ENCODE measurements at regions of chr12 and their contacts with region 1.

Region 1: DNA sequence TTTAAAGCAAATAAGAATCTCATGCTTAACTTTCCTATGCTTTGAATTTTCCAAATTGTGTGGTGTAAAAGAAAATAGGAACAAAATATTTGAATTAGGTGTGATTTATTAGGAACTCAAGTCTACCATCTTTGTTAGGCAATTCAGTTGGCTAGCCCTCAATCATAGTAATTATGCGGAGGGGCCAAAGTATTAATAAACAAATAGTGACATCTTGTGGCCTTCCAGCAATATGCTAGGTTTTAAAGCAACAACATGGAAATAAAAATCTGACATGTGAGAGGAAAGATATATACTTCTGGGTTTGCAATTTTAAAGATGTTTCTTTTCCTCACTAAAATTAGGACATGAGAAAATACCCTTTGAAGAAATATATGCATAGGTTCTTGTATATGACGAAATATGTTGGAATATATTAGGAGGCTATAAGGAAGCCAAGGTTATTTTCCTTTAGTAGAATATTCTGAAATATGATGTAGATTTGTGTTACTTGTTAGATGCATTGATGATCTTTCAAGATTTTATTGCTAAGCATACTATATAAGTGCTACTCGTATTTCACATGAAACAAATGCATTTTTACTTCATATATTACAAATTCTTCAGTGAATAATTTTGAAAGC is 200.4 kb downstream of the PTPRO start:
- DNase-seq: peak; percentile 38
- ATAC-seq: no peak
- H3K4me3 ChIP-seq: no peak overlapping the region
- H3K27ac ChIP-seq: no peak overlapping the region
- H3K4me1 ChIP-seq: peaks cover 7% of the 10 kb centered on the region; the same call in 1 of the 2 replicates
- H3K27me3 ChIP-seq: peaks cover 0 to 4% of the 10 kb centered on the region in 2 experiments; a peak in 1 of 5 replicates
- CTCF ChIP-seq: peak; percentile 64
- EP300 ChIP-seq: no peak
- POLR2A ChIP-seq: no peak
- RAD21 ChIP-seq: no peak

Region 2: DNA sequence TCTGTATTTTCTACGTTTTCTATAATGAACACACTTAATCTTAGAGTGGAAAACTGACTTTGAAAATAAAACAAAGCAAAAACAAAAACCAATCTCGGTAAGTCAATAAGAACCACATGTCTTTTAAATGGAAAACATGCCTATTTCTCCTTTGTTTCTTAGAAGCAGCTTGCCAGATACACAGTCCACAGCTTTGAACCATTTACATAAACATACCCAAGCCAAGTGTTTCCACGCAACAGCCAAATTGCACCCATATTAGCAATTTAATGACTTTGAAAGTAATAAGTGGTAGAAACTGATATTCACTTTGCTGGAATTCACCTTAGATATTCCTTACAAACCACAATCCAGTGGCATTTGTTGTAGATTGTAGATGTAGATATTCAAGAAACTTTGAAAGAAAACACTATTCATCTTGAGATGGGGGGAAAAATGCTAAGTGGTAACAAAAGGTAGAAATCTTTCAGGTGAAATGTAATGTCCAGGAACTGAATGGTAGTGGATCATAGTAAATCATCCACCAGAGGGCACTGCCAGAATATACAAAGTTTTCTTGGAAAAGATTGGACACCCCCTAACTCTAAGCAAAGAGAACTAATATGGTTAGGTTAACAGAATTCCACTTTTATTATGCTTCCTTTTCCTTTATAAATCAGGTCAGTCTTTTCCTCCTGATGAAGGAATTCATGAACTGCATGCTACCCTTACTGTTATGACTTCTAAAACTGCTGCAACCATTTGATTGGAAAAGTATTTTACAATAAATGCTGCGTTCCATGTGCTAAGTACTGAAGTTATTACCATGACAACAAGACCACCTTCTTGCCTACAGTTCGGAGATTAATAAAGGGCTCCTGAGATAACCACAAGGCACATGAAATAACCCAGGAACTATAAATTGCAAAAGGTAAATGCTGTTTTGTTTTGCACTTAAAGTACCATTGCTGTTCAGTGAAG is 371.2 kb before region 1 on chr12:
- CTCF ChIA-PET with region 1: no interaction called
- POLR2A ChIA-PET with region 1: no interaction called
- in situ Hi-C with region 1: no loop called
- intact Hi-C with region 1: loop called (anchors 5 kb)
- DNase-seq: peak; percentile 5
- ATAC-seq: peak; percentile 53; the same call in 2 of the 3 replicates
- H3K4me3 ChIP-seq: no peak overlapping the region
- H3K27ac ChIP-seq: no peak overlapping the region
- H3K4me1 ChIP-seq: no peaks in the 10 kb centered on the region
- H3K27me3 ChIP-seq: 0 out of 5 replicates have a peak, but pooled peaks cover 0 to 3% of the 10 kb centered on the region in 2 experiments
- CTCF ChIP-seq: peak; percentile 43
- EP300 ChIP-seq: no peak
- POLR2A ChIP-seq: no peak
- RAD21 ChIP-seq: no peak

Region 3: DNA sequence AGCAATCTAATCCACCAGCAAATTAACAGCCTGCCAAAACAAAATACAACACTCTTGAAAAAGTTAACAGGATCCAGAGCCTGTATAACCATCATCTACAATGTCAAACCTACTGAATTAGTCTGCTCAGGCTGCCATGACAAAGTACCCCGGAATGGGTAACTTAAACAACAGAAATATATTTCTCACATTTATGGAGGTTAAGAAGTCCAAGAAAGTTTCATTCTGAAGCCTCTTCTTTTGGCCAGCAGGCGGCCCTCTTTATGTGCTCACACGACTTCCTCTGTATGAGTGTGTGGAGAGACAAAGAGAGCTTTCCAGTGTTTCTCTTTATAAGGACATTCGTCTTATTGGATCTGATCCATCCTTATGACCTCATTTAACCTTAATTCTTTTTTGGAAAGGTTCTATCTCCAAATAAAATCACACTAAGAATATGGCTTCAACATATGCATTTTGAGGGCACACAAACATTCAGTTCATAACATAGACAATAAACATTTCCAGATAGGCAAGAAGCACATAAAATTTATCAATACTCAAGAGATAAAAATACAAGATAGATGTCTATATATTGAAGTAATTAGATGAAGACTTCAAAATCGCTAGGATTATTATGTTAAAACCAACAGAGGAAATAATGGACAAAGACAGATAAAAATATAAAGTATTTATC is 295.5 kb before region 1 on chr12:
- CTCF ChIA-PET with region 1: no interaction called
- POLR2A ChIA-PET with region 1: no interaction called
- in situ Hi-C with region 1: no loop called
- intact Hi-C with region 1: loop called (anchors 1 kb)
- DNase-seq: peak; percentile 42
- ATAC-seq: peak; percentile 88
- H3K4me3 ChIP-seq: no peak overlapping the region
- H3K27ac ChIP-seq: no peak overlapping the region
- H3K4me1 ChIP-seq: no peaks in the 10 kb centered on the region
- H3K27me3 ChIP-seq: peaks cover 0 to under 1% of the 10 kb centered on the region in 2 experiments; a peak in 2 of 5 replicates
- CTCF ChIP-seq: peak; percentile 46
- EP300 ChIP-seq: no peak
- POLR2A ChIP-seq: no peak
- RAD21 ChIP-seq: no peak

Region 4: DNA sequence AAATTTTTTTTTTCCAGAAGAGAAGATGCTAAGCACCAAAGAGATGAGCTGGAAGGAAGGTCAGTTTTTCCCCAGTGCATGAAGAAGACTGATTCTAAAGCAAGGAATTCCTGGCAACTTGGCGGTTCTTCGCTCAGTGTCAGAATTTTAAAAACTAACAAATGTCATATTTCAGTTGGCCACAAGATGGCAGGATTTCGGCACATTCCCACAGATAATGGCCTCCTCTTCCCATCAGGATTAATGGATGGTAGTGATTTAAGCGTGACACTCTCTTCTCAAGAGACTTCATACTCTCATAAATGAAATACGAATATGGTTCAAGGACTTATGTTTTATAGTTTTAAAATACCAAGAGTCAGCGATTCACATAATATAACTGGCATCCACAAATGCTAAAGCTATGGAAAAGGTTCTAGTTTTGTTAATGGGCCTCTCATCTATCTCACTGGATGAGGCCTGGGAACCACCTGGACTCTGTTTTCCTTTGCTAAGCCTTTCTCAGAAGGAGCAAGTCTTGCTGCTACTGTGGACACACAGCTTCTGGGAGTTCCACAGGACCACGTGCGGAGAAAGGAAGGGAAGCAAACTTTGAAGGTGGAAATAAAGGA is 246.5 kb before region 1 on chr12:
- CTCF ChIA-PET with region 1: interaction called, 27 read pairs
- POLR2A ChIA-PET with region 1: no interaction called
- in situ Hi-C with region 1: loop called (anchors 5 kb)
- intact Hi-C with region 1: loop called (anchors 1 kb)
- DNase-seq: peak; percentile 11
- ATAC-seq: peak; percentile 79
- H3K4me3 ChIP-seq: no peak overlapping the region
- H3K27ac ChIP-seq: no peak overlapping the region
- H3K4me1 ChIP-seq: no peaks in the 10 kb centered on the region
- H3K27me3 ChIP-seq: no peaks in the 10 kb centered on the region; a peak in 1 of 5 replicates
- CTCF ChIP-seq: peak; percentile 78
- EP300 ChIP-seq: no peak
- POLR2A ChIP-seq: no peak
- RAD21 ChIP-seq: no peak; the same call in 1 of the 2 replicates

Region 5: DNA sequence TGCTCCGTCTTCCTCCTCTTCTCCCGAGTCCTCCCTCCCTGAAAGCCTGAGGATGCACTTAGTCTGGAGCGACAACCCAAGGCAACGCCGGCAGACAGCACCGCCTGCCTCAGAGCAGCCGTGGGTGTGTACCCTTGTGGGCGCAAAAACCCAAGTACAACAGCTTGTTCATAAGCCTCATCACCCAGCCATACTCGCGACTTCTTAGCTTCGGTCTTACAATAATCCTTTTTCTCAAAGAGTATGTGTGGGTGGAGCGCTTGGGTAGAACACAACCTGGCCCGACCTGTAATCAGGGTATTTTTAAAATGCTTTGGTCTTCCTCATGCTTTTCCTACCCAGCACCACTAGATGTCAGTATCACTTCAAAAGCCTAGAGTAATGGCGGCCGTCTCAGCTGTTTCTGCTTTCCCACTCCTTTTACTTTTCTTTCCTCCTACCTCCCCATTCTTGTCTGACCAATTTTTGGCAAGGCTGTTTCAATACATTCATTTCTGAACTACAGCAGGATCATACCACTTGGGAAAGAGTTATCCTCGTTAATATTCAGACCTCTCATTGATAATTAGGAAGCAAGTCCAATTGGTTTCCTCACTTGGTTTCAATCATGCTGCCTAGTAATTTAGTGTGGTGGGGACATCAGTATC is 67.6 kb after region 1 on chr12:
- CTCF ChIA-PET with region 1: no interaction called
- POLR2A ChIA-PET with region 1: no interaction called
- in situ Hi-C with region 1: no loop called
- intact Hi-C with region 1: no loop called
- DNase-seq: peak; percentile 70
- ATAC-seq: peak; percentile 92
- H3K4me3 ChIP-seq: peak overlapping the region; percentile 35 to 73 (median 57); a peak in 5 of 6 replicates
- H3K27ac ChIP-seq: no peak overlapping the region
- H3K4me1 ChIP-seq: peaks cover 24% of the 10 kb centered on the region
- H3K27me3 ChIP-seq: no peaks in the 10 kb centered on the region; a peak in 1 of 5 replicates
- CTCF ChIP-seq: peak; percentile 89
- EP300 ChIP-seq: no peak
- POLR2A ChIP-seq: no peak
- RAD21 ChIP-seq: peak; percentile 85

Region 6: DNA sequence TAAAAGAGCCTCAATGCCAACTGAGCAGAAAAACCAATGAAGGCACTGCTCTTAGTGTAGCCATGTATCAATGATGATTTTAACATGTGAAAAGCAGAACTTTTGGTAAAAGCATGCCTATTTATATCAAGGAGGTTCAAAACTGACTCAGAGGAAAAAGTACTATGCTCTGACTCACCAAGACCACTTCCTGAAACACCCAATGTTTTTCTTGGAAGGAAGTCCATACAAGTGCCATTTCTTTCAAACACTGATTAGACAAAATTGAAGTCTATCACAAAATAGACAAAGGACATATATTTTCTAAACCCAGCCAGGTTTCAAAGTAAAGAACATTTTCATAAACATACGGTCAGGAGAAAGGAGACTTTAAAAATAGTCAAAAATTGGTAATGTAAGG is 177.9 kb after region 1 on chr12:
- CTCF ChIA-PET with region 1: no interaction called
- POLR2A ChIA-PET with region 1: no interaction called
- in situ Hi-C with region 1: no loop called
- intact Hi-C with region 1: no loop called
- DNase-seq: no peak
- ATAC-seq: no peak
- H3K4me3 ChIP-seq: no peak overlapping the region
- H3K27ac ChIP-seq: no peak overlapping the region
- H3K4me1 ChIP-seq: peaks cover 18% of the 10 kb centered on the region
- H3K27me3 ChIP-seq: no peaks in the 10 kb centered on the region
- CTCF ChIP-seq: no peak
- EP300 ChIP-seq: no peak
- POLR2A ChIP-seq: no peak
- RAD21 ChIP-seq: no peak

Region 7: GRCh38 chr12:16198884-16199283 is 676.2 kb after region 1 on chr12:
- CTCF ChIA-PET with region 1: no interaction called
- POLR2A ChIA-PET with region 1: no interaction called
- in situ Hi-C with region 1: no loop called
- intact Hi-C with region 1: no loop called
- DNase-seq: no peak
- ATAC-seq: no peak
- H3K4me3 ChIP-seq: no peak overlapping the region
- H3K27ac ChIP-seq: no peak overlapping the region
- H3K4me1 ChIP-seq: no peaks in the 10 kb centered on the region
- H3K27me3 ChIP-seq: no peaks in the 10 kb centered on the region
- CTCF ChIP-seq: no peak
- EP300 ChIP-seq: no peak
- POLR2A ChIP-seq: no peak
- RAD21 ChIP-seq: no peak